CD4-positive, alpha-beta T cell (primary cell): ENCODE measurements at regions of chrX and their contacts with region 1.

Region 1: GRCh38 chrX:9464435-9465371 is at the start of gene TBL1X:
- DNase-seq: peak in 13 of 14 experiments; percentile 18 to 75 (median 43)
- ATAC-seq: peak; percentile 24
- H3K4me3 ChIP-seq: peak within 1 kb of the TSS; percentile 75
- H3K4me3 Mint-ChIP-seq: peak within 1 kb of the TSS; percentile 89
- H3K27ac ChIP-seq: peak within 1 kb of the TSS in 1 of 2 donors; percentile 61
- H3K27ac Mint-ChIP-seq: peak within 1 kb of the TSS; percentile 95
- H3K4me1 ChIP-seq: peaks cover 57% of the 10 kb centered on the region
- H3K4me1 Mint-ChIP-seq: peaks cover 47% of the 10 kb centered on the region
- H3K27me3 ChIP-seq: no peaks in the 10 kb centered on the region
- H3K27me3 Mint-ChIP-seq: peaks cover 4% of the 10 kb centered on the region
- CTCF ChIP-seq: no peak
- total RNA-seq, gene TBL1X: 17.4 to 19.2 TPM

Region 2: GRCh38 chrX:8988446-8988845 is 476.3 kb before region 1 on chrX:
- CTCF ChIA-PET with region 1: no interaction called
- POLR2A ChIA-PET with region 1: interaction called, 3 read pairs
- intact Hi-C with region 1: loop called in 1 of 2 experiments (anchors 1 kb)
- DNase-seq: peak in 5 of 14 experiments; percentile 11 to 40 (median 19)
- ATAC-seq: peak; percentile 39
- H3K4me3 ChIP-seq: no peak overlapping the region
- H3K4me3 Mint-ChIP-seq: peak overlapping the region; percentile 15
- H3K27ac ChIP-seq: peak overlapping the region in 1 of 2 donors; percentile 17
- H3K27ac Mint-ChIP-seq: peak overlapping the region; percentile 91
- H3K4me1 ChIP-seq: peaks cover 16% of the 10 kb centered on the region
- H3K4me1 Mint-ChIP-seq: peaks cover 33% of the 10 kb centered on the region
- H3K27me3 ChIP-seq: no peaks in the 10 kb centered on the region
- H3K27me3 Mint-ChIP-seq: no peaks in the 10 kb centered on the region
- CTCF ChIP-seq: no peak

Region 3: GRCh38 chrX:9341291-9342201 is 123.2 kb before region 1 on chrX:
- CTCF ChIA-PET with region 1: interaction called, 4 read pairs
- POLR2A ChIA-PET with region 1: interaction called, 56 read pairs
- intact Hi-C with region 1: loop called (anchors 1 kb)
- DNase-seq: peak; percentile 27 to 83 (median 56)
- ATAC-seq: peak; percentile 48
- H3K4me3 ChIP-seq: peak overlapping the region; percentile 40
- H3K4me3 Mint-ChIP-seq: peak overlapping the region; percentile 78
- H3K27ac ChIP-seq: peak overlapping the region; percentile 60 to 83
- H3K27ac Mint-ChIP-seq: peak overlapping the region; percentile 95
- H3K4me1 ChIP-seq: peaks cover 38% of the 10 kb centered on the region
- H3K4me1 Mint-ChIP-seq: peaks cover 46% of the 10 kb centered on the region
- H3K27me3 ChIP-seq: no peaks in the 10 kb centered on the region
- H3K27me3 Mint-ChIP-seq: no peaks in the 10 kb centered on the region
- CTCF ChIP-seq: no peak

Region 4: GRCh38 chrX:9515973-9516538 is 51.4 kb after region 1 on chrX:
- CTCF ChIA-PET with region 1: no interaction called
- POLR2A ChIA-PET with region 1: no interaction called
- intact Hi-C with region 1: loop called in 1 of 2 experiments (anchors 1 kb)
- DNase-seq: no peak
- ATAC-seq: no peak
- H3K4me3 ChIP-seq: no peak overlapping the region
- H3K4me3 Mint-ChIP-seq: no peak overlapping the region
- H3K27ac ChIP-seq: no peak overlapping the region
- H3K27ac Mint-ChIP-seq: peak overlapping the region; percentile 10
- H3K4me1 ChIP-seq: peaks cover 9% of the 10 kb centered on the region
- H3K4me1 Mint-ChIP-seq: peaks cover 56% of the 10 kb centered on the region
- H3K27me3 ChIP-seq: no peaks in the 10 kb centered on the region
- H3K27me3 Mint-ChIP-seq: no peaks in the 10 kb centered on the region
- CTCF ChIP-seq: no peak

Region 5: DNA sequence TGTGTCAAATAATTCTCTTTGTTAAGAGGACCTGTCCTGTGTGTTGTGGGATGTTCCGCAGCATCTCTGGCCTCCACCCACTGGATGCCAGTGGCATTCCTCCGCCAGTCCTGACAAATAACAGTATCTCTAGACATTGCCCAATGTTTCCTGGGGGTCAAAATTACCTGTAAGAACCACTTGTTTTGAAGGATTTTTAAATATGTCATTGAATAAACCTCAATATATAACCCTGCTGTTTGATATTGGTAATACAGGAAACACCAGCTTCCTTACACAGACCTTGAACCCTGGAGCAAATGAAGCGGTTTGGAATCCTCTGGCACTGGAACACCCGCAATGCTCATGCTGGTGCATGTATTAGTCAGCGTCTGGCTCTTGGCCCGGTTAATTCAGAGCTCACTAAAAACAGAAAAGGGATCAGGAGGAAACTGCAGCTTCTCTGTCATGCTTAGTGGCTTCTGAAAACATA is 101.5 kb after region 1 on chrX:
- CTCF ChIA-PET with region 1: no interaction called
- POLR2A ChIA-PET with region 1: no interaction called
- intact Hi-C with region 1: no loop called
- DNase-seq: peak in 5 of 14 experiments; percentile 3 to 43 (median 14)
- ATAC-seq: peak; percentile 61
- H3K4me3 ChIP-seq: no peak overlapping the region
- H3K4me3 Mint-ChIP-seq: peak overlapping the region; percentile 79
- H3K27ac ChIP-seq: no peak overlapping the region
- H3K27ac Mint-ChIP-seq: peak overlapping the region; percentile 40
- H3K4me1 ChIP-seq: peaks cover 44% of the 10 kb centered on the region
- H3K4me1 Mint-ChIP-seq: peaks cover 16% of the 10 kb centered on the region
- H3K27me3 ChIP-seq: no peaks in the 10 kb centered on the region
- H3K27me3 Mint-ChIP-seq: no peaks in the 10 kb centered on the region
- CTCF ChIP-seq: no peak

Region 6: DNA sequence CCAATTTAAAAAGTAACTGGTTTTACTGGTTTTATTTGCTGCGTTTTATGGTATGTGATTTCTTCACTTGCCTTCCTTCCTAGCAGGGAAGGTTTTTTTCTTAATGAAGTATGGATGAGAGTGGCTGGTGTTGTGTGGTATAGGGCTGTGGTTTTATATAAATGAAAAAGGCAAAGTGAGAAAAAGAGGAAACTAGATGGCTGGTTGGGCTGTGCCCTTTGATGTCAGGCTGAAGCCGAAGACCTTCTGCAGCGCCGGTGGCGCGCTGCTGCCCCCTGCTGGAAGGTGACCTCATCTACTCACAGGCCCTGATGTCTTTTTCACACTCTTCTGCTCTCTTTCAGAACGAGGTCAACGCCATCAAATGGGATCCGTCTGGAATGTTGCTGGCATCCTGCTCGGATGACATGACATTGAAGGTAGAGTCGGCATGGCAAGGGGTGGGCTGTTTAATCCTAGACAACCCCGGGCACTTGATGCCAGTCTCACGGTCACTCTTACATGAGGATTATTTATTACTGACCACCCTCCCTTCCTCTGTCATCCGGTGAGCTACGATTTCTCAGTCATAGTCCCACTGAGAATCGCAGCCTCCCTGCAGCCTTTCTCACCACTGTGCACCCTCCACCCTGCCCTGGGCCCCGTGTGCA is 244.3 kb after region 1 on chrX:
- CTCF ChIA-PET with region 1: no interaction called
- POLR2A ChIA-PET with region 1: no interaction called
- intact Hi-C with region 1: loop called in 1 of 2 experiments (anchors 2 kb)
- DNase-seq: peak; percentile 62 to 88 (median 76)
- ATAC-seq: peak; percentile 89
- H3K4me3 ChIP-seq: no peak overlapping the region
- H3K4me3 Mint-ChIP-seq: no peak overlapping the region
- H3K27ac ChIP-seq: no peak overlapping the region
- H3K27ac Mint-ChIP-seq: no peak overlapping the region
- H3K4me1 ChIP-seq: peaks cover 6% of the 10 kb centered on the region
- H3K4me1 Mint-ChIP-seq: peaks cover 12% of the 10 kb centered on the region
- H3K27me3 ChIP-seq: no peaks in the 10 kb centered on the region
- H3K27me3 Mint-ChIP-seq: no peaks in the 10 kb centered on the region
- CTCF ChIP-seq: peak; percentile 69